Activated CD4-positive, alpha-beta memory T cell treated with anti-CD3 and anti-CD28 coated beads, Interleukin-2, amount 10 ng/mL, durations not matched to agents 7 days and 5 days (primary cell): ENCODE measurements at regions of chr18 and their contacts with region 1.

Region 1: GRCh38 chr18:36839835-36840234 is 10.9 kb downstream of the KIAA1328 start:
- DNase-seq: no peak
- H3K4me3 Mint-ChIP-seq: no peak overlapping the region
- H3K27ac Mint-ChIP-seq: no peak overlapping the region
- H3K4me1 Mint-ChIP-seq: peaks cover 4% of the 10 kb centered on the region
- H3K27me3 Mint-ChIP-seq: no peaks in the 10 kb centered on the region

Region 2: GRCh38 chr18:36757081-36757480 is 82.8 kb before region 1 on chr18:
- CTCF ChIA-PET with region 1: no interaction called
- POLR2A ChIA-PET with region 1: no interaction called
- DNase-seq: no peak
- H3K4me3 Mint-ChIP-seq: no peak overlapping the region
- H3K27ac Mint-ChIP-seq: no peak overlapping the region
- H3K4me1 Mint-ChIP-seq: no peaks in the 10 kb centered on the region
- H3K27me3 Mint-ChIP-seq: no peaks in the 10 kb centered on the region

Region 3: DNA sequence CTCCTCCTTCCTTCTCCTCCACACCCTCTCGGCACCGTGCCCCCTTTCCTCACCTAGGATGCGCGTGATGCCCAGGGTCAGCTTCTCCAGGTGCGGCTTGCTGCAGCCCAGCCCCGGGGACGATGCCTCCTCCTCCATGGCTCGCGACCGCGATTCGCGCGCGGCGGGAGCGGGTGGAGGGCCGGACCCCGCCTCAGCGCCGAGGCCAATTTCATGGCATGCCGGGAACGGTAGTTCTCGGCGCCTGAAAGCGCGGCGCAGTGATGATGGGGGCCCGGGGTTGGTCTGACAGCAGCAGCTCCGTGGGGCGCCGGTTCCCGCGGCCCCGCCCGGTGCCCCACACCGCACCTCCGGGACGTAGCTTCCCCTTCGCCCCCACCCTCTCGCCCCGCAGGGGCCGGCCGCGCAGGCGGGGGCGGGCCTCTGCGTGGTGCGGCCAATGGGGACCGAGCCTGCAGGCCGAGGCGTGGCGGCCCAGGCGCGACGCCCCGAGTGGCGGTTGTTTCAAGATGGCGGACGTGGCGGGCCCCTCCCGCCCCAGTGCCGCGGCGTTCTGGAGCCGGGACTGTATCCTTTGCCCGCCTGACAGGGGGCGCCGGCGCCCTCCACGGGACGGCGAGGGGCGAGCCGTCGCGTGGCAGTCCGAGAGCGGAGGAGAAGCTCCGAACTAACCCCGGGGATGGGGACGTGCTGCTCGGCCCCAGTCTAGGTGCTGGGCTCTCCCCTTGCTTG is 11.0 kb before region 1 on chr18 and contains the starts of genes KIAA1328 and TPGS2:
- CTCF ChIA-PET with region 1: interaction called, 5 read pairs
- POLR2A ChIA-PET with region 1: interaction called, 13 read pairs
- DNase-seq: peak; percentile 93
- H3K4me3 Mint-ChIP-seq: peak within 1 kb of the TSS; percentile 83
- H3K27ac Mint-ChIP-seq: peak within 1 kb of the TSS; percentile 96
- H3K4me1 Mint-ChIP-seq: peaks cover 46% of the 10 kb centered on the region
- H3K27me3 Mint-ChIP-seq: no peaks in the 10 kb centered on the region
- total RNA-seq, gene KIAA1328: 7.4 to 8.6 TPM
- total RNA-seq, gene TPGS2: 110 TPM